ENCODE measurements at regions of chr16 and their contacts with region 1.

Region 1: GRCh38 chr16:8660841-8661301 is 13.5 kb upstream of the ABAT start:
- DNase-seq: peak in 2 of 3 donors; percentile 7 to 40
- H3K4me3 ChIP-seq: no peak overlapping the region
- H3K4me3 Mint-ChIP-seq: no peak overlapping the region
- H3K27ac ChIP-seq: no peak overlapping the region
- H3K27ac Mint-ChIP-seq: no peak overlapping the region
- H3K4me1 ChIP-seq: no peaks in the 10 kb centered on the region
- H3K4me1 Mint-ChIP-seq: no peaks in the 10 kb centered on the region
- H3K27me3 ChIP-seq: no peaks in the 10 kb centered on the region
- H3K27me3 Mint-ChIP-seq: no peaks in the 10 kb centered on the region
- CTCF ChIP-seq: no peak

Region 2: DNA sequence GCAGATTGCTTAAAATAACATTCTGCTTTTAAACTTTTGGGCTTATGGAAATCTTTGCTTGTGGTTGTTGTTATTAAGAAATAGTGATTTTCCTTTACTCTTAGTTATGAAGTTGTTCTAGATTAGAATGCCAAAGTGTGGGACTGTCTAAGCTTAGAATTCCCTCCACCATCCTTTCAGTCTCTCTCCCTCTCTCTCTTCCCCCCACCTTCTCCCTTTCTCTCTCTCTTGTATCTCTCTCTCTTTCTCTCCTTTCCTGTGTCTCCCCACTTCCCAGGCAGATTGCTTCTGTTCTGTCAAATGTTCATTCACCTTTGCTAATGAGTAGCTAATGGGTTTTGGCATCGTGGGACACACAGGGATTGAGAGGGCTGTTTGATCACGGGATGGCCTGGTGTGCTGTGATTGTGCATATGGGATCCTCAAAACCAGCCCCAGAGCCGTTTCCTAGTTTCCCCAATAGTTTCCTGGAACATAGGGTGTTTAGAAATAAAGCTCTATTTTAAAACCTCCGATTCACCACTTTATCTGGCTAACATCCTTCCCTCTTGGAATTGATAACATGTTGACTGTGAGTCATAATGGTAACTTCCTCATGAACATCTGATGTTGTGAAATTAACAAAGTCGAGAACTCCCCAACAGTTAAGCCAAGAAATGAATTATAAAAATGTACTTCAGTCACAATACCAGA is 573.1 kb before region 1 on chr16:
- intact Hi-C with region 1: no loop called
- DNase-seq: no peak
- H3K4me3 ChIP-seq: no peak overlapping the region
- H3K4me3 Mint-ChIP-seq: no peak overlapping the region
- H3K27ac ChIP-seq: no peak overlapping the region
- H3K27ac Mint-ChIP-seq: no peak overlapping the region
- H3K4me1 ChIP-seq: no peaks in the 10 kb centered on the region
- H3K4me1 Mint-ChIP-seq: peaks cover 8% of the 10 kb centered on the region
- H3K27me3 ChIP-seq: no peaks in the 10 kb centered on the region
- H3K27me3 Mint-ChIP-seq: peaks cover 0 to 2% (median 0%) of the 10 kb centered on the region in 3 donors
- CTCF ChIP-seq: no peak

Region 3: DNA sequence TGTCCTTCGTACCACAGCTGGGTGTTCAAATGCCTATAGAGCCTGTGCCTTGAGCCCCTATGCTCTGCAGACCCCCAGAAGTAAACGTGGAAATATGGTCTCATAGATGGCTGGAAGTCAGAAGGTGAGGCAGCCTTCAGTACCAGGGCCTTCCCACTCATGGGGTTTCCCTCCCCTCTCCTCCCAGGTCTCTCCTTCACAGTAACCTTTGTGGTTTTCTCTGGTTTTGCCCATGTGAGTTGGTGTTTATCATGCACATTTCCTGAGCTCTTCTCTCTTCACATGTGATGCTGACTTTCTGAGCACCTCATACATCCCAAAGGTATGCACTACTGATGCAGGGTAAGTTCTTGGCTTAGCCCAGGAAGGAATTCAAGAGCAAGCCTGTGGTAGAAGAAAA is 106.0 kb before region 1 on chr16:
- intact Hi-C with region 1: no loop called
- DNase-seq: no peak
- H3K4me3 ChIP-seq: no peak overlapping the region
- H3K4me3 Mint-ChIP-seq: no peak overlapping the region
- H3K27ac ChIP-seq: no peak overlapping the region
- H3K27ac Mint-ChIP-seq: no peak overlapping the region
- H3K4me1 ChIP-seq: no peaks in the 10 kb centered on the region
- H3K4me1 Mint-ChIP-seq: no peaks in the 10 kb centered on the region
- H3K27me3 ChIP-seq: no peaks in the 10 kb centered on the region
- H3K27me3 Mint-ChIP-seq: peaks cover 8 to 20% (median 12%) of the 10 kb centered on the region in 3 donors
- CTCF ChIP-seq: no peak

Region 4: DNA sequence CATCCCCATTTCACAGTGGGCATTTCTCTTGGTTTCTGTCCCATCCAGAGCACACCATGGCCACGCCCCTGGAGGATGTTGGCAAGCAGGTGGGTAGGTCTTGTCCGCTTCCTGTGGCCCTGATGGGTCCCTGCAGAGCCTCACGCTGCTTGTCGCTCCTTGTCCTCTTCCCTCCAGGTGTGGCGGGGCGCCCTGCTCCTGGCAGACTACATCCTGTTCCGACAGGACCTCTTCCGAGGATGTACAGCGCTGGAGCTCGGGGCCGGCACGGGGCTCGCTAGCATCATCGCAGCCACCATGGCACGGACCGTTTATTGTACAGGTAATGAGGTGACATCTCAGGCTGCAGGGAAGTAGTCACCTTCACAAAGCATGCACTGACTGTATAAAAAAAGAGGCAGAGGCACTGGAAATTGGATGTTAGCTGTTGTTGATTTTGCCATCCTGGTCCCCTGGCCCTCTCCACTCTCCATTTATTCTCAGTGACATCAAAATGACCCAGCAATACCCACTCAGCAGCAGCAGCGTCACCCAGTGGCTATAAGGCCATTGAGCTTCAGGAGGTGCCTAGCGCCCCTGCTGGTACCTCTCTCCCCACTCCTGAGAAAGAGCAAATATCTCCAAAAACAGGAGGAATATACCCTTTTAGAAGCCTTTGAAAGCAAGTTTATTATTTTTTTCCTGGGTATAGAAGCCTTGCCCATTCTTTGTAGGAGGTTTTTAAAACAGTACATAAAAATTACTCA is 25.7 kb before region 1 on chr16:
- intact Hi-C with region 1: no loop called
- DNase-seq: no peak
- H3K4me3 ChIP-seq: no peak overlapping the region
- H3K4me3 Mint-ChIP-seq: no peak overlapping the region
- H3K27ac ChIP-seq: peak overlapping the region; percentile 3 to 66
- H3K27ac Mint-ChIP-seq: peak overlapping the region; percentile 60 to 89 (median 80)
- H3K4me1 ChIP-seq: peaks cover 28 to 41% of the 10 kb centered on the region in 2 donors
- H3K4me1 Mint-ChIP-seq: peaks cover 40% of the 10 kb centered on the region
- H3K27me3 ChIP-seq: no peaks in the 10 kb centered on the region
- H3K27me3 Mint-ChIP-seq: no peaks in the 10 kb centered on the region
- CTCF ChIP-seq: peak; percentile 18

Region 5: DNA sequence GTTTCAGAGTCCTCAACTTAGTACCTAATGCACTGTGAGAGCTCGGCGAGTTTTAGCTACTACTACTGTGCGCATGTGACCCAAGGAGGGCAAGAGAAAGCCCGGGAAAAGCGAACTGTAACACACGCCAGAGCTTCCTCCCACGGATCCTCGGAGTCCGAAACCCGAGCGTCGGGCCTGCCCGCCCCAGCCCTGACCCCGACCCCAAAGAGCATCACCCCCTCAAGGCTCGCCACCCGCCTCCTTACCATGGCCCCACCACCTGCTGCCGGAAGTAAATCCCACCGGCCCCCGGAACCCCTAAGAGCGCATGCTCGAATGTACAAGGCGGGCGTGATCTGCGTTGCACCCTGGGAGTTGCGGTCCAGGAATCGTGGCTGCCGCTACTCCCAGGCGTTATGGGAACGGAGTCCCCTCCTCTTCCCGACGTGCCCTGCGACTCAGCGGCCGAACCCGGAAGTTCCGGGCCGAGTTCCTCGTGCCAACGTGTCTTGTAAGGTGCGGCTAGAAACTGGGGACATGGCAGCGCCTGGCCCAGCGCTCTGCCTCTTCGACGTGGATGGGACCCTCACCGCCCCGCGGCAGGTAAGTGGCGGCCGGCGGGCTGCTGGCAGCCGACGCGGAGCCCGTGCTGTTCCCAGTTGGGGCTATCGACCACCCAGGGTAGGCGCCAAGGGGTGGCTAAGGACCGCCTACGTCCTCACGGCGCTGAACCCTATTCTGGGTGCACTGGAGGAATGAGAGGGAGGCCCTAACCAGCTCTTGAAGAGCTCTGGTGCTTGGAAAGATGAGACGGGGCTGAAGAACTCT is 136.7 kb after region 1 on chr16 and contains the starts of genes PMM2 and TMEM186:
- intact Hi-C with region 1: loop called in 1 of 2 experiments (anchors 5 kb)
- DNase-seq: peak; percentile 93 to 96 (median 94)
- H3K4me3 ChIP-seq: peak within 1 kb of the TSS; percentile 65 to 91 (median 71)
- H3K4me3 Mint-ChIP-seq: peak within 1 kb of the TSS; percentile 96 to 98
- H3K27ac ChIP-seq: peak within 1 kb of the TSS; percentile 21 to 89
- H3K27ac Mint-ChIP-seq: peak within 1 kb of the TSS; percentile 81 to 98 (median 90)
- H3K4me1 ChIP-seq: peaks cover 29 to 37% of the 10 kb centered on the region in 2 donors
- H3K4me1 Mint-ChIP-seq: peaks cover 31% of the 10 kb centered on the region
- H3K27me3 ChIP-seq: no peaks in the 10 kb centered on the region
- H3K27me3 Mint-ChIP-seq: peaks cover 0 to 3% (median 0%) of the 10 kb centered on the region in 3 donors
- CTCF ChIP-seq: no peak
- polyA plus RNA-seq, gene PMM2: 15.2 to 22.9 (median 17.8) TPM
- polyA plus RNA-seq, gene TMEM186: 3.8 to 4.5 (median 4.4) TPM

Region 6: DNA sequence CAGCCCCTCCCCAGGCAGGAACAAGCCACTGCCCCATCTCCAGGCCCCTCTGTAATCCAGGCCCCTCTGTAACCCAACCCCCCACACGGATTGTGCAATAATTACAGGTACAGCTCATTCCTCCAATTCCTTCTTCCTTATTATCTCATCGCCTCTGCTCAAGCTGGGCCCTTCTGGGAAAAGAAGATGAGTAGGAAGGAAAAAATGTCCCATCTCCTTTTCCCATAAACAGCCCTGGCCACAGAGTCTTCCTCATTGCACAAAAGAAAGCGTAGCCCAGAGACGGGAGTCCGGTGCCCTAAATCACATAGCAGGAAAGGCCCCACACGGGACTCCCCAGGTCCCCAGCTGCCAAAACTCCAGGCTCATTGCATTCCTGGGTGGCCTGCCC is 217.6 kb after region 1 on chr16:
- intact Hi-C with region 1: loop called in 1 of 2 experiments (anchors 2 kb)
- DNase-seq: no peak
- H3K4me3 ChIP-seq: no peak overlapping the region
- H3K4me3 Mint-ChIP-seq: no peak overlapping the region
- H3K27ac ChIP-seq: no peak overlapping the region
- H3K27ac Mint-ChIP-seq: no peak overlapping the region
- H3K4me1 ChIP-seq: no peaks in the 10 kb centered on the region
- H3K4me1 Mint-ChIP-seq: peaks cover 5% of the 10 kb centered on the region
- H3K27me3 ChIP-seq: no peaks in the 10 kb centered on the region
- H3K27me3 Mint-ChIP-seq: peaks cover 1 to 11% (median 6%) of the 10 kb centered on the region in 3 donors
- CTCF ChIP-seq: no peak

Measured in CD14-positive monocyte (primary cell).